ENCODE measurements at regions of chr3 and their contacts with region 1.

Region 1: GRCh38 chr3:188819939-188820338 is 351.8 kb upstream of the TPRG1 start:
- DNase-seq: no peak

Region 2: GRCh38 chr3:188760408-188760807 is 59.5 kb before region 1 on chr3:
- intact Hi-C with region 1: no loop called
- DNase-seq: no peak

Region 3: GRCh38 chr3:188869628-188870027 is 49.7 kb after region 1 on chr3:
- intact Hi-C with region 1: loop called in 1 of 2 experiments (anchors 5 kb)
- DNase-seq: no peak

Measured in posterior vena cava (tissue), 2 donors.